CD8-positive, alpha-beta memory T cell (primary cell): ENCODE measurements at regions of chr17 and their contacts with region 1.

Region 1: GRCh38 chr17:8173056-8173870 is 2.9 kb downstream of the TMEM107 start:
- DNase-seq: peak; percentile 60 to 92 (median 89)
- H3K4me3 ChIP-seq: peak overlapping the region; percentile 57
- H3K4me3 Mint-ChIP-seq: peak overlapping the region; percentile 86 to 95 (median 90)
- H3K27ac ChIP-seq: peak overlapping the region; percentile 98
- H3K27ac Mint-ChIP-seq: peak overlapping the region; percentile 99 to 100 (median 100)
- H3K4me1 ChIP-seq: peaks cover 44% of the 10 kb centered on the region
- H3K4me1 Mint-ChIP-seq: peaks cover 37 to 55% (median 51%) of the 10 kb centered on the region in 3 donors
- H3K27me3 ChIP-seq: no peaks in the 10 kb centered on the region
- H3K27me3 Mint-ChIP-seq: peaks cover 0 to 5% of the 10 kb centered on the region in 2 donors

Region 2: GRCh38 chr17:7972131-7972785 is 201.0 kb before region 1 on chr17:
- CTCF ChIA-PET with region 1: no interaction called
- POLR2A ChIA-PET with region 1: no interaction called
- DNase-seq: no peak
- H3K4me3 ChIP-seq: no peak overlapping the region
- H3K4me3 Mint-ChIP-seq: no peak overlapping the region
- H3K27ac ChIP-seq: no peak overlapping the region
- H3K27ac Mint-ChIP-seq: no peak overlapping the region
- H3K4me1 ChIP-seq: no peaks in the 10 kb centered on the region
- H3K4me1 Mint-ChIP-seq: no peaks in the 10 kb centered on the region
- H3K27me3 ChIP-seq: no peaks in the 10 kb centered on the region
- H3K27me3 Mint-ChIP-seq: peaks cover 16 to 42% of the 10 kb centered on the region in 2 donors

Region 3: GRCh38 chr17:8151123-8151640 is 22.1 kb before region 1 on chr17:
- CTCF ChIA-PET with region 1: interaction called, 6 read pairs
- POLR2A ChIA-PET with region 1: interaction called, 36 read pairs
- DNase-seq: peak; percentile 87 to 97 (median 95)
- H3K4me3 ChIP-seq: peak overlapping the region; percentile 60
- H3K4me3 Mint-ChIP-seq: peak overlapping the region in 4 of 7 donors; percentile 57 to 98 (median 95)
- H3K27ac ChIP-seq: peak overlapping the region; percentile 100
- H3K27ac Mint-ChIP-seq: peak overlapping the region in 3 of 8 donors; percentile 87 to 99 (median 91)
- H3K4me1 ChIP-seq: peaks cover 55% of the 10 kb centered on the region
- H3K4me1 Mint-ChIP-seq: peaks cover 19 to 68% (median 33%) of the 10 kb centered on the region in 3 donors
- H3K27me3 ChIP-seq: no peaks in the 10 kb centered on the region
- H3K27me3 Mint-ChIP-seq: peaks cover 0 to 20% of the 10 kb centered on the region in 2 donors

Region 4: DNA sequence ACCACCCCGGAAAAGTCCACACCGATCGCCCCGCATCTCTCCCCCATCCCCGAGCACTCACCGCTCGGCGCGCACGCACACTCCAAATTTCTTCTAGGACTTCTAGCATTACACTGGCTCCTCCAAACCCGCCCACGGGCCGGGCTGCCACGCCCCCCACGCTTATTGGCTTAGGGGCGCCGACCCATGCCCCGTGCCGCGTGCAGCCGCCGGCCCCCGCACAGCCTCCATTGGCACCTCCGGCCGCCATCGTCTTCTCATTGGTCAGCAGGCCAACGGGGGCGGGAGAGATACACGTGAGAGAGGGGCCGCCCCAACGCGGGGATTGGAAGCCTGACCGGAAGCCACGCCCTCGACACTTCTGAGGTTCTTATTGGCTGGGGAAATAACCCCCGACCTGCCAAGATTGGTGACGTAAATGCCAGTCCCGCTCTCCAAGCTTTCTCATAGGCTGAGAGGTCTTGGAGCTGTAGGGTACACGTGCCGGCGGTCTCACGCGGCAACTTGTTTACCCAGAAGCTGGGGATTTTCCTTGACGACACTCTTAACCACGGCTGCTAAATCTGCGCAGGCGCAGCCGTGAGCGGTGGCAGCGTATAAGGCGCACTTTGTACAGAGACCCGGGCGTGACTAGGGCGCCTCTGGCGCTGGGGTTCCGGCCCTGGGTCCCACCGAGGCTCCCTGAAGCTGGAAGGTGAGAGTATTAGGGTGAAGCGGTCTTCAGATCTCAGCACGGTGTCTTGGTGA is 16.8 kb before region 1 on chr17:
- CTCF ChIA-PET with region 1: interaction called, 19 read pairs
- POLR2A ChIA-PET with region 1: interaction called, 36 read pairs
- DNase-seq: peak; percentile 100
- H3K4me3 ChIP-seq: peak overlapping the region; percentile 100
- H3K4me3 Mint-ChIP-seq: no peak overlapping the region
- H3K27ac ChIP-seq: peak overlapping the region; percentile 100
- H3K27ac Mint-ChIP-seq: no peak overlapping the region
- H3K4me1 ChIP-seq: peaks cover 77% of the 10 kb centered on the region
- H3K4me1 Mint-ChIP-seq: peaks cover 32 to 73% (median 48%) of the 10 kb centered on the region in 3 donors
- H3K27me3 ChIP-seq: no peaks in the 10 kb centered on the region
- H3K27me3 Mint-ChIP-seq: peaks cover 0 to 14% of the 10 kb centered on the region in 2 donors

Region 5: GRCh38 chr17:8162233-8162996 is 10.8 kb before region 1 on chr17 and contains the start of gene VAMP2:
- CTCF ChIA-PET with region 1: interaction called, 19 read pairs
- POLR2A ChIA-PET with region 1: interaction called, 46 read pairs
- DNase-seq: peak; percentile 81 to 90 (median 86)
- H3K4me3 ChIP-seq: peak within 1 kb of the TSS; percentile 96
- H3K4me3 Mint-ChIP-seq: peak within 1 kb of the TSS; percentile 87 to 95 (median 93)
- H3K27ac ChIP-seq: peak within 1 kb of the TSS; percentile 98
- H3K27ac Mint-ChIP-seq: peak within 1 kb of the TSS; percentile 94 to 100 (median 98)
- H3K4me1 ChIP-seq: peaks cover 60% of the 10 kb centered on the region
- H3K4me1 Mint-ChIP-seq: peaks cover 54 to 66% (median 58%) of the 10 kb centered on the region in 3 donors
- H3K27me3 ChIP-seq: no peaks in the 10 kb centered on the region
- H3K27me3 Mint-ChIP-seq: peaks cover 0 to 3% of the 10 kb centered on the region in 2 donors
- total RNA-seq, gene VAMP2: 38.3 to 41.0 TPM

Region 6: GRCh38 chr17:8253800-8254199 is 80.5 kb after region 1 on chr17:
- CTCF ChIA-PET with region 1: no interaction called
- POLR2A ChIA-PET with region 1: no interaction called
- DNase-seq: peak in 1 of 5 donors; percentile 39
- H3K4me3 ChIP-seq: no peak overlapping the region
- H3K4me3 Mint-ChIP-seq: no peak overlapping the region
- H3K27ac ChIP-seq: no peak overlapping the region
- H3K27ac Mint-ChIP-seq: no peak overlapping the region
- H3K4me1 ChIP-seq: peaks cover 11% of the 10 kb centered on the region
- H3K4me1 Mint-ChIP-seq: peaks cover 17 to 20% (median 19%) of the 10 kb centered on the region in 3 donors
- H3K27me3 ChIP-seq: no peaks in the 10 kb centered on the region
- H3K27me3 Mint-ChIP-seq: no peaks in the 10 kb centered on the region